Left ventricle myocardium inferior (tissue), 1 donor: ENCODE measurements at regions of chr14 and their contacts with region 1.

Region 1: GRCh38 chr14:21068521-21069387 is 1.4 kb upstream of the ARHGEF40 start:
- DNase-seq: peak; percentile 47
- H3K4me3 ChIP-seq: peak overlapping the region; percentile 88
- H3K27ac ChIP-seq: peak overlapping the region; percentile 95
- H3K4me1 ChIP-seq: peaks cover 47% of the 10 kb centered on the region
- H3K27me3 ChIP-seq: no peaks in the 10 kb centered on the region
- CTCF ChIP-seq: peak; percentile 78

Region 2: GRCh38 chr14:20434701-20435581 is 633.8 kb before region 1 on chr14:
- intact Hi-C with region 1: no loop called
- DNase-seq: peak; percentile 62
- H3K4me3 ChIP-seq: peak overlapping the region; percentile 63
- H3K27ac ChIP-seq: peak overlapping the region; percentile 72
- H3K4me1 ChIP-seq: peaks cover 29% of the 10 kb centered on the region
- H3K27me3 ChIP-seq: peaks cover 31% of the 10 kb centered on the region
- CTCF ChIP-seq: no peak

Region 3: GRCh38 chr14:21103710-21104447 is 35.1 kb after region 1 on chr14:
- intact Hi-C with region 1: loop called (anchors 5 kb)
- DNase-seq: peak; percentile 97
- H3K4me3 ChIP-seq: peak overlapping the region; percentile 88
- H3K27ac ChIP-seq: peak overlapping the region; percentile 99
- H3K4me1 ChIP-seq: peaks cover 58% of the 10 kb centered on the region
- H3K27me3 ChIP-seq: no peaks in the 10 kb centered on the region
- CTCF ChIP-seq: peak; percentile 90